Mucosa of descending colon (tissue), 3 donors: ENCODE measurements at regions of chr9 and their contacts with region 1.

Region 1: DNA sequence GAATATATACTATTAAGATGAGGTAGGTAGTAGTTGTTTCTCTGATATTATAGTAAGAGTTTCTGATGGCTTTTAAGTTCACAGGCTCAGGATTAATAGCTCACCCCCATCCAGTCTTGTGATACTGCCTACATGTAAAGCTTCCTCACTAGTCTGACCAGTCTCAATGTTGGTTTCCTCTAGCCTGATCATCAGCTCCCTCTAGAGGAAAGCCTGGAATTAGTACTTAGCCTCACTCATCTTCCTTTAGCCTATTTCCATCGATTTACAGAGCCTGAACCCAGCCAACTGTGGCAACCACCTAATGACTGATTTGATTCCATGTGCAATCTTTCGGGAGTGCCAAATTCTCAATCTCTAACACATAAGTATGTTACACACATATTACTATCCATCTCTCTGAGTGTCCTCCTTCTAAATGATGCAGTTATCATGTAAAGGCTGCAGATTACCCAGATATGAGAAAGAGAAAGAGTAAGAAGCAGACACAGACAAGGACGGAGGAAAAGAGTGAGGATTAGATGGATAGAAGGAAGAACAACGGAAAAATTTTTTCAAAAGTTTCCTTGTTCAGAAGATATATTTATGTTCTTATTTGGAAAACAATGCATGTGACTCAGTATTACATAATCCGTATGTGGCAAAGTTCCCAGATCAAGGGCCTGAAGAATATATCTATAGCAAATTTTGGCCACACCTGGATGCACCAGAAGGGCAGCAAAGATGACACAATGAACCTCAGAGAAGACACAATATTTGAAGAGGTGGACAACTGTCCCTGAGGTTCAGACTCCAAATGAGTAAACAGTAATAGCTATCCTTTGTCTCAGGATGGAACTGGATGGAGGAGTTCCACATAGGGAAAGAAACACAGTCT is 333.7 kb downstream of the ELAVL2 start:
- DNase-seq: peak in 1 of 3 donors; percentile 27
- ATAC-seq: peak; percentile 73
- H3K4me3 ChIP-seq: no peak overlapping the region
- H3K4me1 ChIP-seq: no peaks in the 10 kb centered on the region
- CTCF ChIP-seq: no peak

Region 2: GRCh38 chr9:23123048-23123632 is 369.2 kb before region 1 on chr9:
- intact Hi-C with region 1: loop called in 1 of 2 experiments (anchors 5 kb)
- DNase-seq: peak in 1 of 3 donors; percentile 58
- ATAC-seq: no peak
- H3K4me3 ChIP-seq: no peak overlapping the region
- H3K4me1 ChIP-seq: no peaks in the 10 kb centered on the region
- CTCF ChIP-seq: no peak

Region 3: GRCh38 chr9:23342291-23342690 is 150.1 kb before region 1 on chr9:
- intact Hi-C with region 1: no loop called
- DNase-seq: no peak
- ATAC-seq: no peak
- H3K4me3 ChIP-seq: no peak overlapping the region
- H3K4me1 ChIP-seq: no peaks in the 10 kb centered on the region
- CTCF ChIP-seq: no peak

Region 4: GRCh38 chr9:23790351-23791260 is 298.2 kb after region 1 on chr9:
- intact Hi-C with region 1: no loop called
- DNase-seq: no peak
- ATAC-seq: no peak
- H3K4me3 ChIP-seq: no peak overlapping the region
- H3K4me1 ChIP-seq: no peaks in the 10 kb centered on the region
- CTCF ChIP-seq: no peak